Psoas muscle (tissue), 8 donors: ENCODE measurements at regions of chr3 and their contacts with region 1.

Region 1: DNA sequence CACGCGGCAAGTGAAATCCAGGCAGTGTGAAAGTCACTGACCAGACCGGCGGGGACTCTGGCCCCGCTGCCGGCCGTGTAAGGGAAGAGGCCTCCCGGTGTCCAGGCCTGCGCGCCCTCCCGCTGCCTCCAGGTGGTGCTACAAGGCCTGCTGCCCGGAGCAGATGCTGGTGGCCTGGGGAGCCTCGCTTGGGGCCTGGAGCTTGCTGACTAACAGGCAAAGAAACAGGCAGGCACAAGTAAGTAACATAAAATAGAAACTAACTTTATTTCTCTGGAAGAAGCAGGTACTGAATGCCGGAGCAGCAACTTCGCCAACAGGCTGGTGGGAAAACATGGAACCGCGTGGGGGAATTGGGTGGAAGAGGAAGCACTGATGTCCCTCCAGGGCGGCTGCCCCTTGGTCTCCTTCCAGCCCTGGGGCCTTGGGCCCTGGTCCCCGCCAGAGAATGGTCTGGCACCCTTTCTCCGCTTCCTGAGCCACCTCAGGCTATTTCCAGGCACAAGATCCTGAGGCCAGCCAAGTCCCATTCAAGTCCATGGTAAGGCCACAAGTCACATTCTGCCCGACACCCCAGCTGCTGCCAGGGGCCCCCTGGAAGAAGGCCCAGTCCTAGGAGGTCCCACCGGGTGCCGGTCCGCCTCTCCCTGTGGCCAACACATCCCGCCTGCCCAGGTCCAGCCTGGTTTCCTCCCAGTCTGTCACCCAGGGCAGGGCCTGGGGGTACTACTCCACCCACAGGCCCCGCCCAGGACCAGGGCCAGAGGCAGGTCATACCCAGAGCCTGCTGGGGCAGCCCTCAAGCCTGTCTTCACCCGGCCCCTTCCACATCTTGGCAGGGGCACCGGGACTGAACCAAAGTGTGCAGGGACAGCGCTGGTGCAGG is 45.0 kb downstream of the TNK2 start:
- DNase-seq: peak; percentile 93 to 97
- ATAC-seq: peak; percentile 89 to 98 (median 90)
- H3K4me3 ChIP-seq: peak overlapping the region; percentile 1
- H3K27ac ChIP-seq: peak overlapping the region; percentile 91
- H3K4me1 ChIP-seq: peaks cover 18% of the 10 kb centered on the region
- H3K27me3 ChIP-seq: no peaks in the 10 kb centered on the region
- CTCF ChIP-seq: peak; percentile 98

Region 2: DNA sequence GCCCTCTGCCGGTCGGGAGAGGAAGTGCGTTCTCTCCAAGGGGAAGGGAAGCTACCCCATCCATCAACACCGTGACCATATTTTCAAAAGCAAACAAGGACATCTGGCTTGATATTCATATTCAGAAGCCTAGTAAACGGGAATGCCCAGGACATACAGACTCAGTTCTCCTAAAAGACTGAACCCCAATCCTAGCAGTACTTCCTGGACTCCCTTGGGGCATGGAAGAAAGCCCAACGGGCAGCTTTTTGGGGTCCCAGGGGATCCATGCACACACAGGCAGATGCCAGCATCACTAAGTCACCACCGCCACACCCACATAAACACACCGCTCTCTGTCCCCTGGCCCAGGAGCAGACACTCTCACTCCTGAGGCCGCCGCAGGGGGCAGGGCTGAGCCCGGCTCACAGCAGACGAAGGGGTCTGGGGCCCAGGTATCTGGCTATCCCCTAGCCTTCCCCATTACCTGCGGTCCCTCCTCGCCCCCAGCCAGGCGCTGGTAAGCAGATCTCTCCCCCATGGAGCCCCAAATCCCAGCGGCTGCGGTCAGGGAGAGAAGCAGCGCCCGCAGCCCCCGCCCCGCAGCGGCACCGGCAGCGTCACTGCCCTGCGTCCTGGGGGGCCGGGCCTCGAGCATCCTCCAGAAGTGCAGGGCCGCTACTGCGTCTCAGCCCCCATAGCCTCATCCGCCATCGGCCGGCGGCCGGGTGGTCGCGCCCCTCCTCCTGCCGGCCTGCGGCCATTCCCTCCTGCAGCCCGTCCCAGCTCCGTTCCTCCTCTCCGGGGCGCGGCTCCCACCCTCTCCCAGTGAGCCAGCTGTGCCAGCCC is 31.6 kb after region 1 on chr3:
- intact Hi-C with region 1: loop called (anchors 1 to 2 kb)
- DNase-seq: peak; percentile 52 to 80
- ATAC-seq: peak; percentile 56 to 60 (median 58)
- H3K4me3 ChIP-seq: peak overlapping the region; percentile 82
- H3K27ac ChIP-seq: peak overlapping the region; percentile 91
- H3K4me1 ChIP-seq: peaks cover 72% of the 10 kb centered on the region
- H3K27me3 ChIP-seq: no peaks in the 10 kb centered on the region
- CTCF ChIP-seq: peak; percentile 92

Region 3: DNA sequence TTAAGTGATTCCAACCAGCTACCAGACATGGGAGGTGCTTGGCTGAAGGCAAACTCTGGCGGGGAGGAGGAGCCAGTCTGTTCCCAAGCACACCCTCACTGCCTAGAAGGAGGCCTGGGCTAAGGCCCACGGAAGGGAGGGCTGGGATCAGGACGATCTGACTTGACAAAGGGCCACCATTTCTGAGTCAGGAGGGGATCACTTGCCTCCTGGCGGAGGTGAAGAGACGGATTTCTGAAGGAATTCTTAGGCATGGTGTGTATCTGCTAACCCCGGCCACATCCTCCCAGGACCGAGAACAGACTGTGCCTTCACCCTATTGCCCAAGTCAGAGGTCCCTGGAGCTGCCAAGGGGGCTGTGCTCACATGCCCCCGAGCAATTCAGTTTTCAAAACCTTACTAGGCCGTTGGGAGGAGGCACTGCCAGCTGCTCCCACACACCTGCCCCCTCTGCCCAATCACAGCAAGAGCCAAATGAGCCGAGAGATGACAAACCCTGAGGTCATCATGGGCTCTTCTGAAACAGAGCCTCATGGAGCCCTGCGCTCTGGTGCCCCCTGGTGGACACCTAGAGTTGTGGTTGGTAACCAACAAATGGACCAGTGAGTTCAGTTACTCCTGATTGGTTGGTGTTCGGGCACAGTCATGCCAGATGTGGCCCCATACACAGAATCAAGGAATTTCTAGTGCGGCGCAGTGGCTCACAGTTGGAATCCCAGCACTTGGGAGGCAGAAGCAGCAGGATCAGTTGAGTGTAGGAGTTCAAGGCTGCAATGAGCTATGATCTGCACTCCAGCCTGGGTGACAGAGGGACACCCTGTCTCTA is 51.5 kb after region 1 on chr3:
- intact Hi-C with region 1: loop called in 1 of 2 experiments (anchors 1 kb)
- DNase-seq: peak; percentile 97
- ATAC-seq: peak; percentile 84 to 96 (median 90)
- H3K4me3 ChIP-seq: peak overlapping the region; percentile 48
- H3K27ac ChIP-seq: peak overlapping the region; percentile 91
- H3K4me1 ChIP-seq: peaks cover 2% of the 10 kb centered on the region
- H3K27me3 ChIP-seq: no peaks in the 10 kb centered on the region
- CTCF ChIP-seq: peak; percentile 99

Region 4: GRCh38 chr3:196108083-196108743 is 244.8 kb after region 1 on chr3:
- intact Hi-C with region 1: no loop called
- DNase-seq: no peak
- ATAC-seq: peak; percentile 36 to 48 (median 42)
- H3K4me3 ChIP-seq: no peak overlapping the region
- H3K27ac ChIP-seq: peak overlapping the region; percentile 58
- H3K4me1 ChIP-seq: no peaks in the 10 kb centered on the region
- H3K27me3 ChIP-seq: no peaks in the 10 kb centered on the region
- CTCF ChIP-seq: no peak